T-cell (primary cell): ENCODE measurements at regions of chr9 and their contacts with region 1.

Region 1: GRCh38 chr9:92987677-92988076 is 40.4 kb downstream of the FGD3 start:
- DNase-seq: no peak
- ATAC-seq: no peak
- H3K4me3 ChIP-seq: no peak overlapping the region
- H3K4me3 Mint-ChIP-seq: peak overlapping the region; percentile 8 to 55 (median 37)
- H3K27ac ChIP-seq: peak overlapping the region; percentile 16
- H3K27ac Mint-ChIP-seq: peak overlapping the region; percentile 83 to 85
- H3K4me1 ChIP-seq: peaks cover 27 to 58% of the 10 kb centered on the region in 2 experiments
- H3K4me1 Mint-ChIP-seq: peaks cover 85 to 93% (median 90%) of the 10 kb centered on the region in 3 donors
- H3K27me3 ChIP-seq: no peaks in the 10 kb centered on the region
- H3K27me3 Mint-ChIP-seq: no peaks in the 10 kb centered on the region

Region 2: GRCh38 chr9:93020771-93021670 is 33.3 kb after region 1 on chr9:
- CTCF ChIA-PET with region 1: interaction called in 1 of 2 experiments, 3 read pairs
- POLR2A ChIA-PET with region 1: interaction called in 1 of 2 experiments, 10 read pairs
- DNase-seq: peak in 25 of 35 experiments; percentile 4 to 71 (median 54)
- ATAC-seq: peak in 2 of 4 experiments; percentile 24 to 91
- H3K4me3 ChIP-seq: no peak overlapping the region
- H3K4me3 Mint-ChIP-seq: peak overlapping the region in 1 of 3 donors; percentile 28
- H3K27ac ChIP-seq: peak overlapping the region; percentile 67
- H3K27ac Mint-ChIP-seq: peak overlapping the region; percentile 96 to 99
- H3K4me1 ChIP-seq: peaks cover 21 to 74% of the 10 kb centered on the region in 2 experiments
- H3K4me1 Mint-ChIP-seq: peaks cover 66 to 75% (median 69%) of the 10 kb centered on the region in 3 donors
- H3K27me3 ChIP-seq: no peaks in the 10 kb centered on the region
- H3K27me3 Mint-ChIP-seq: no peaks in the 10 kb centered on the region

Region 3: GRCh38 chr9:93730217-93730616 is 742.5 kb after region 1 on chr9:
- CTCF ChIA-PET with region 1: no interaction called
- POLR2A ChIA-PET with region 1: no interaction called
- DNase-seq: no peak
- ATAC-seq: no peak
- H3K4me3 ChIP-seq: no peak overlapping the region
- H3K4me3 Mint-ChIP-seq: no peak overlapping the region
- H3K27ac ChIP-seq: no peak overlapping the region
- H3K27ac Mint-ChIP-seq: no peak overlapping the region
- H3K4me1 ChIP-seq: no peaks in the 10 kb centered on the region
- H3K4me1 Mint-ChIP-seq: no peaks in the 10 kb centered on the region
- H3K27me3 ChIP-seq: peaks cover 0 to 41% of the 10 kb centered on the region in 2 experiments
- H3K27me3 Mint-ChIP-seq: peaks cover 40 to 51% of the 10 kb centered on the region in 2 donors